Endothelial cell of umbilical vein (primary cell): ENCODE measurements at regions of chr19 and their contacts with region 1.

Region 1: GRCh38 chr19:16185123-16185767 is at the start of gene FAM32A:
- DNase-seq: peak; percentile 99
- H3K4me3 ChIP-seq: peak within 1 kb of the TSS; percentile 84 to 96 (median 84)
- H3K27ac ChIP-seq: peak within 1 kb of the TSS; percentile 76
- H3K4me1 ChIP-seq: peaks cover 10% of the 10 kb centered on the region
- H3K27me3 ChIP-seq: no peaks in the 10 kb centered on the region
- CTCF ChIP-seq: peak in 1 of 2 donors; percentile 14
- POLR2A ChIP-seq: peak; percentile 79
- total RNA-seq, gene FAM32A: 76.3 and 82.8 TPM in 2 replicates

Region 2: GRCh38 chr19:15091901-15092753 is 1093.1 kb before region 1 on chr19:
- CTCF ChIA-PET with region 1: interaction called, 12 read pairs
- POLR2A ChIA-PET with region 1: no interaction called
- dilution Hi-C with region 1: no loop called
- intact Hi-C with region 1: no loop called
- DNase-seq: peak; percentile 58
- H3K4me3 ChIP-seq: no peak overlapping the region
- H3K27ac ChIP-seq: no peak overlapping the region
- H3K4me1 ChIP-seq: no peaks in the 10 kb centered on the region
- H3K27me3 ChIP-seq: no peaks in the 10 kb centered on the region
- CTCF ChIP-seq: peak; percentile 55 to 60
- POLR2A ChIP-seq: no peak

Region 3: DNA sequence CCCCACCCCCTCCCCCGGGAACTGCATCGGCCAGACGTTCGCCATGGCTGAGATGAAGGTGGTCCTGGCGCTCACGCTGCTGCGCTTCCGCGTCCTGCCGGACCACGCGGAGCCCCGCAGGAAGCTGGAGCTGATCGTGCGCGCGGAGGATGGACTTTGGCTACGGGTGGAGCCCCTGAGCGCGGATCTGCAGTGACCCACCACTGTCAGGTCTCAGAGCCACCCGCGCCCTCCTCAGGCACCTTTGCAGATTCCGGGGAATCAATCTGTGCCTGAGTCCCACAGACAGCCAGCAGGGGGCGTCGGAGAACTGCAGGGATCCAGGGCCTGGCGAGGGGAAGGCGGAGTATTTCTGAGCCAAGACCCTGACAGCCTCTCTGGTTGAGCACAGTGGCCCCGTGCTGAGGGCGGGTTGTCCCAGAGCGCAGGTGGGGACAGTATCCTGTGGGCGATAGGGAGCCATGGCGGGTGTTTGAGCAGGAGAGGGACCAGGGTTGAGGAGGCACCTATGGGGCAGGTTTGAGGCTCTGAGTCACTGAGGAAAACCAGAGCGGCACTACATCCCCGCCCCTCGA is 600.6 kb before region 1 on chr19:
- CTCF ChIA-PET with region 1: no interaction called
- POLR2A ChIA-PET with region 1: no interaction called
- dilution Hi-C with region 1: no loop called
- intact Hi-C with region 1: loop called (anchors 1 kb)
- DNase-seq: peak; percentile 58
- H3K4me3 ChIP-seq: no peak overlapping the region
- H3K27ac ChIP-seq: no peak overlapping the region
- H3K4me1 ChIP-seq: no peaks in the 10 kb centered on the region
- H3K27me3 ChIP-seq: no peaks in the 10 kb centered on the region
- CTCF ChIP-seq: peak; percentile 86 to 91
- POLR2A ChIP-seq: no peak

Region 4: GRCh38 chr19:16025108-16026101 is 159.8 kb before region 1 on chr19:
- CTCF ChIA-PET with region 1: interaction called, 23 read pairs
- POLR2A ChIA-PET with region 1: no interaction called
- dilution Hi-C with region 1: no loop called
- intact Hi-C with region 1: loop called (anchors 1 kb)
- DNase-seq: peak; percentile 49
- H3K4me3 ChIP-seq: no peak overlapping the region
- H3K27ac ChIP-seq: no peak overlapping the region
- H3K4me1 ChIP-seq: no peaks in the 10 kb centered on the region
- H3K27me3 ChIP-seq: no peaks in the 10 kb centered on the region
- CTCF ChIP-seq: peak; percentile 48 to 68
- POLR2A ChIP-seq: no peak

Region 5: DNA sequence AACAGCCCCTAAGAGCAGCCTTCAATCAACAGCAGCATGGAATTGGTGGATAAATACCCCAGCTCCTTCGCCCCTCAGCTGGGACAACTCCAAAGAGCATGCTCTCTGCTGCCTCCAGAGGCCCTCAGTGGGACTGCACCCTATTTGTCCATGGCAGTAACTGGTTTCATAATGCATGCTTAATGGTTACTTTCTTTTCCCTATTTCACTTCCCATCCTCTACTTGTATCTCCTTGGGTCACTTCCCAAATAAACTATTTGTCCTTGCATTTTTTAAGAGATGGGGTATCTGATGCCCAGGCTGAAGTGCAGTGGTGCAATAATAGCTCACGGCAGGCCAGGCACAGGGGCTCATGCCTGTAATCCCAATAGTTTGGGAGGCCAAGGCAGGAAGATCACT is 122.5 kb before region 1 on chr19:
- CTCF ChIA-PET with region 1: interaction called, 4 read pairs
- POLR2A ChIA-PET with region 1: no interaction called
- dilution Hi-C with region 1: no loop called
- intact Hi-C with region 1: loop called (anchors 1 kb)
- DNase-seq: peak; percentile 45
- H3K4me3 ChIP-seq: no peak overlapping the region
- H3K27ac ChIP-seq: no peak overlapping the region
- H3K4me1 ChIP-seq: peaks cover 21% of the 10 kb centered on the region
- H3K27me3 ChIP-seq: no peaks in the 10 kb centered on the region
- CTCF ChIP-seq: peak; percentile 85 to 87
- POLR2A ChIP-seq: no peak

Region 6: GRCh38 chr19:16111160-16111908 is 73.9 kb before region 1 on chr19 and contains the start of gene RAB8A:
- CTCF ChIA-PET with region 1: interaction called, 3 read pairs
- POLR2A ChIA-PET with region 1: no interaction called
- dilution Hi-C with region 1: no loop called
- intact Hi-C with region 1: loop called (anchors 1 kb)
- DNase-seq: peak; percentile 100
- H3K4me3 ChIP-seq: peak within 1 kb of the TSS; percentile 75 to 96 (median 87)
- H3K27ac ChIP-seq: peak within 1 kb of the TSS; percentile 75
- H3K4me1 ChIP-seq: peaks cover 12% of the 10 kb centered on the region
- H3K27me3 ChIP-seq: no peaks in the 10 kb centered on the region
- CTCF ChIP-seq: peak; percentile 93 to 96
- POLR2A ChIP-seq: no peak
- total RNA-seq, gene RAB8A: 98.9 and 107 TPM in 2 replicates

Region 7: GRCh38 chr19:16143399-16144245 is 41.6 kb before region 1 on chr19 and contains the start of gene HSH2D:
- CTCF ChIA-PET with region 1: no interaction called
- POLR2A ChIA-PET with region 1: no interaction called
- dilution Hi-C with region 1: no loop called
- intact Hi-C with region 1: no loop called
- DNase-seq: no peak
- H3K4me3 ChIP-seq: no peak within 1 kb of the TSS
- H3K27ac ChIP-seq: no peak within 1 kb of the TSS
- H3K4me1 ChIP-seq: no peaks in the 10 kb centered on the region
- H3K27me3 ChIP-seq: peaks cover 0 to 2% of the 10 kb centered on the region in 2 experiments
- CTCF ChIP-seq: no peak
- POLR2A ChIP-seq: no peak
- total RNA-seq, gene HSH2D: not detected in 2 replicates

Region 8: DNA sequence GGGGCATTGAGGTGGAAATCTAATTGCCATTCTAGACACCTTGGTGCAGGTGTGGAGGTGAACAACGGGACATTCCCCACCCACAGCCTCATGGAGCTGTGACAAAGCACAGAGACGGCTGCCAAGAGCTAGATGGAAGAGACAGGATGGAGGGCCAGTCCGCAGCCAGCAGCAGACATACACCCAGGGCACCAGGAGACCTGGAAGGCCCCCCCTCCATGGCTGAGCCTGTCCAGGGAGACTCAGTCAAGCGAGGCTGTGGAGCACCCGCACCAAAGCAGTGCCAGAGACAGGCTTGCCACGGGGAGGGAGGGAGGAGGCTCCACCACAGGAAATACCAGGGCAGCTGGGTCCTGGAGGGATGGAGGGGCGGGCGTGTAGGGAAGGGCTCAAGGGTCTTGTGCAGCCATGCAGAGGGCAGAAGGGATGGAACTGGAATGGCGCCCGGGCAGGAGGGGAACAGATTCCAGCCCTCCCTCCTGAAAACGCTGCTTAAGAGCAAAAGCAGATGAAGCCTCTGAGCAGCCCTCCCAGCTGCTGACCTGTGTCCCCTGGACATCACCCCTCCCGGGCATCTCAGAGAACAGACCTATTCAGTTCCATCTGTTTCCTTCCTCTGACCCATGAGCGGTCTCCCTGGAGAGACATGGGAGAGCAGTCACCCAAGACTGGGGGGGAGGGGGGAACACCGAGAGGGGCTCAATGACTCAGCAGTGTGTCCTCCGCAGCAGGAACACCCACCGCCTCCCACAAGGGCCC is 272.1 kb after region 1 on chr19:
- CTCF ChIA-PET with region 1: no interaction called
- POLR2A ChIA-PET with region 1: no interaction called
- dilution Hi-C with region 1: no loop called
- intact Hi-C with region 1: no loop called
- DNase-seq: peak; percentile 84
- H3K4me3 ChIP-seq: no peak overlapping the region
- H3K27ac ChIP-seq: peak overlapping the region; percentile 66
- H3K4me1 ChIP-seq: peaks cover 19% of the 10 kb centered on the region
- H3K27me3 ChIP-seq: no peaks in the 10 kb centered on the region
- CTCF ChIP-seq: no peak
- POLR2A ChIP-seq: peak; percentile 38